ENCODE measurements at regions of chr12 and their contacts with region 1.

Region 1: DNA sequence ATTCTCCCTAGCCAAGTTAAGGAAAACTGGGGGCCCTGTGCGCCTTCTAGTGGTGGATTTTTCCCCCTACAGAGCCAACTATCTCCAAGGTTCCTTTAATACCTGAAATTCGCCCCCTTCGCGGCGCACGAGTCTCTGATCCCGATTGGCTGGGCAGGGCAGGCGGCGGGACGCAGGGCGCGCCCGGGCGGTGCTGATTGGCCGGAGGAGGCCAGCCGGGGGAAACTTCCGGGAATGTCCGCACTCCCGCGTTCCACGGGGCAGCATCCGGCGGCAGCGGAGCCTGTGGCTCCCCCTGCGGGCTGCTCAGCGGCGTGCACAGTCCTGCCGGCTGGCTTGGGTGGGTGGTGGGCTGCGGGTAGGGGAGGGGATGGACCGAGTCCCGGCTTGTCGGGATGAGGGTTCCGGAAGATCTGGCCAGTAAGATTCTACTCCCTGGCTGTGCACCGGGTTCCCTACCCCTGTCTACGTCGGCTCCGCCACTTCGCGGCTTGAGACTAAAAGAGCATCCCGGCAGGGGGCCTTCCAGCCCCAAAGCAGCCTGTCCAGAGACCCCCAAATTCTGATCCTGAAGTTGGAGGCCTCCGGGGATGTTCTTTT is at the start of gene NABP2:
- DNase-seq: peak; percentile 88
- ATAC-seq: peak; percentile 72
- H3K4me3 Mint-ChIP-seq: peak within 1 kb of the TSS; percentile 99
- H3K27ac Mint-ChIP-seq: peak within 1 kb of the TSS; percentile 98
- H3K4me1 Mint-ChIP-seq: peaks cover 48% of the 10 kb centered on the region
- H3K27me3 Mint-ChIP-seq: no peaks in the 10 kb centered on the region
- CTCF ChIP-seq: peak; percentile 67
- total RNA-seq, gene NABP2: 27.7 and 31.4 TPM in 2 replicates

Region 2: DNA sequence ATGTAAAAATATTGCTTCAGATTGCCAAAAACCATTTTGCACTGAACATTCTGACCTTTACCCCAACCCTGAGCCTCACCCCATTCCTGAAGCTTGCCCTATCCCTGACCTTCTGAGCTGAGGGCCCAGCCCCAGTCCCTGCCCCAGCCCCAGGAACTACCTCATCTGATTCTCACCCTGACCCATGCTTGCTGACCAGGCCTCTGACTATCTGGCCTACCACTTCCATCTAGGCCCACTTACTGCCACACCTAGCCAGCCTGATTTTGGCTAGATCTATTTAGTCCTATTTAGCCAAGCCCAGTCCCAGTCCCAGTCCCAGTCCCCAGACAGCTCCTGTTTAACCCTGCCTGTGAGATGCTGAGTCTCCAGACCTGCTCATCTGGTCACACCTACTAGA is 553.9 kb before region 1 on chr12:
- CTCF ChIA-PET with region 1: no interaction called
- POLR2A ChIA-PET with region 1: no interaction called
- intact Hi-C with region 1: no loop called
- DNase-seq: no peak
- ATAC-seq: no peak
- H3K4me3 Mint-ChIP-seq: no peak overlapping the region
- H3K27ac Mint-ChIP-seq: no peak overlapping the region
- H3K4me1 Mint-ChIP-seq: peaks cover 28% of the 10 kb centered on the region
- H3K27me3 Mint-ChIP-seq: no peaks in the 10 kb centered on the region
- CTCF ChIP-seq: no peak

Region 3: GRCh38 chr12:56104109-56104814 is 119.9 kb before region 1 on chr12 and contains the start of gene PA2G4:
- CTCF ChIA-PET with region 1: interaction called, 3 read pairs
- POLR2A ChIA-PET with region 1: interaction called, 10 read pairs
- intact Hi-C with region 1: no loop called
- DNase-seq: peak; percentile 92
- ATAC-seq: peak; percentile 91
- H3K4me3 Mint-ChIP-seq: peak within 1 kb of the TSS; percentile 98
- H3K27ac Mint-ChIP-seq: peak within 1 kb of the TSS; percentile 93
- H3K4me1 Mint-ChIP-seq: peaks cover 33% of the 10 kb centered on the region
- H3K27me3 Mint-ChIP-seq: no peaks in the 10 kb centered on the region
- CTCF ChIP-seq: no peak
- total RNA-seq, gene PA2G4: 137 and 155 TPM in 2 replicates

Region 4: GRCh38 chr12:56189176-56189917 is 34.9 kb before region 1 on chr12 and contains the start of gene SMARCC2:
- CTCF ChIA-PET with region 1: interaction called, 40 read pairs
- POLR2A ChIA-PET with region 1: interaction called, 83 read pairs
- intact Hi-C with region 1: loop called (anchors 1 kb)
- DNase-seq: peak; percentile 82
- ATAC-seq: peak; percentile 81
- H3K4me3 Mint-ChIP-seq: peak within 1 kb of the TSS; percentile 95
- H3K27ac Mint-ChIP-seq: peak within 1 kb of the TSS; percentile 96
- H3K4me1 Mint-ChIP-seq: peaks cover 43% of the 10 kb centered on the region
- H3K27me3 Mint-ChIP-seq: no peaks in the 10 kb centered on the region
- CTCF ChIP-seq: no peak
- total RNA-seq, gene SMARCC2: 109 and 136 TPM in 2 replicates

Region 5: GRCh38 chr12:56266693-56267442 is 42.7 kb after region 1 on chr12 and contains the start of gene COQ10A:
- CTCF ChIA-PET with region 1: no interaction called
- POLR2A ChIA-PET with region 1: interaction called, 25 read pairs
- intact Hi-C with region 1: loop called (anchors 2 kb)
- DNase-seq: peak; percentile 90
- ATAC-seq: peak; percentile 90
- H3K4me3 Mint-ChIP-seq: peak within 1 kb of the TSS; percentile 93
- H3K27ac Mint-ChIP-seq: peak within 1 kb of the TSS; percentile 93
- H3K4me1 Mint-ChIP-seq: peaks cover 18% of the 10 kb centered on the region
- H3K27me3 Mint-ChIP-seq: no peaks in the 10 kb centered on the region
- CTCF ChIP-seq: no peak
- total RNA-seq, gene COQ10A: 30.2 and 35.6 TPM in 2 replicates

Region 6: DNA sequence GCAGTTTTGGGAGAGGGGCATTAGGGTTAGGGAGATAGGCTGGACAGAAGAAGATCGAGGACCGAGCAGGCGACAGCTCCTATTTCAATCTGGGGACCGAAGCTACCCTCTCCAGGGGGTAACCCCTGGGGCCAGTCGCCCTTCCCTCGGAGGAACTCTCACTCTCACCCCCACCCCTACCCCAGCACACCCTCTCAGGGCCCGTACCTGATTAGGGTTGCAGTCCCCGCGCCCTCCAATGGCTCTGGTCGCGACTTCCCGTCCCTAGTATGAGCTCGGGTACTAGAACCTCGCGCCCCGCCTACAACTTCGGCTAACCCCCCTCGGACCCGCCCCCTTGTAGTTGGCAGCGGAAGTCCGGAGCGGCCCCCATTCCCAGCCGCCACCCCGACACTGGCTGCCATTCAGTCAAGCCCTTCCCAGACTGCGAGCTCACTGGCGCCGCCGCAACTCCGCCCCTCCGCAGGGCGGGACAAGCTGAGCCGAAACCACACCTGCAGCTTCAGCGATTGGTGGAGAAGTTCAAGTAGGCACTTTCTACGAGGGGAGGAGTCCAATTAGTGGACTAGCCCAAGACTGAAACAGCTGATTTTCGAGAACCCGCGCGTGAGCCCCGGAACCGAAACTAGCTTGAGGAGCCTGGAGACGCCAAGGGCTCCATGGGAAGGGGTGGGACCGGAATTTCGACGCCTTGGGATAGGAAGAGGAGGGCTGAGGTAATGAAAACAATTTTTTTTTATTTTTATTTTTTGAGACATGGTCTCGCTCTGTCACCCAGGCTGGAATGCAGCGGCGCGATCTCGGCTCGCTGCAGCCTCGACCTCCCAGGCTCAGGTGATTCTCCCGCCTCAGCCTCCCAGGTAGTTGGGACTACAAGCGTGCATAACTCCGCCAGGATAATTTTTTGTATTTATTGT is 135.9 kb after region 1 on chr12 and contains the start of gene STAT2:
- CTCF ChIA-PET with region 1: no interaction called
- POLR2A ChIA-PET with region 1: interaction called, 21 read pairs
- intact Hi-C with region 1: no loop called
- DNase-seq: peak; percentile 98
- ATAC-seq: peak; percentile 94
- H3K4me3 Mint-ChIP-seq: peak within 1 kb of the TSS; percentile 92
- H3K27ac Mint-ChIP-seq: peak within 1 kb of the TSS; percentile 94
- H3K4me1 Mint-ChIP-seq: peaks cover 36% of the 10 kb centered on the region
- H3K27me3 Mint-ChIP-seq: no peaks in the 10 kb centered on the region
- CTCF ChIP-seq: no peak
- total RNA-seq, gene STAT2: 159 and 177 TPM in 2 replicates